ENCODE measurements at regions of chr7 and their contacts with region 1.

Region 1: GRCh38 chr7:43834463-43835251 is 34.7 kb downstream of the MRPS24 start:
- DNase-seq: no peak
- ATAC-seq: no peak
- H3K4me3 ChIP-seq: no peak overlapping the region
- H3K27ac ChIP-seq: no peak overlapping the region
- H3K4me1 ChIP-seq: peaks cover 0 to 24% of the 10 kb centered on the region in 2 experiments; a peak in 2 of 4 replicates
- H3K27me3 ChIP-seq: no peaks in the 10 kb centered on the region
- CTCF ChIP-seq: no peak
- POLR2A ChIP-seq: no peak
- RAD21 ChIP-seq: no peak

Region 2: GRCh38 chr7:42931834-42932651 is 902.6 kb before region 1 on chr7 and contains the starts of genes MRPL32 and PSMA2:
- CTCF ChIA-PET with region 1: no interaction called
- POLR2A ChIA-PET with region 1: no interaction called
- RAD21 ChIA-PET with region 1: no interaction called
- intact Hi-C with region 1: no loop called
- DNase-seq: peak; percentile 95
- ATAC-seq: peak; percentile 100
- H3K4me3 ChIP-seq: peak within 1 kb of the TSS; percentile 75 to 93
- H3K27ac ChIP-seq: peak within 1 kb of the TSS; percentile 47
- H3K4me1 ChIP-seq: peaks cover 5 to 26% of the 10 kb centered on the region in 2 experiments; a peak in 2 of 4 replicates
- H3K27me3 ChIP-seq: no peaks in the 10 kb centered on the region
- CTCF ChIP-seq: no peak
- POLR2A ChIP-seq: peak; percentile 92
- RAD21 ChIP-seq: no peak
- total RNA-seq, gene MRPL32: 47.5 TPM
- total RNA-seq, gene PSMA2: 152 TPM

Region 3: DNA sequence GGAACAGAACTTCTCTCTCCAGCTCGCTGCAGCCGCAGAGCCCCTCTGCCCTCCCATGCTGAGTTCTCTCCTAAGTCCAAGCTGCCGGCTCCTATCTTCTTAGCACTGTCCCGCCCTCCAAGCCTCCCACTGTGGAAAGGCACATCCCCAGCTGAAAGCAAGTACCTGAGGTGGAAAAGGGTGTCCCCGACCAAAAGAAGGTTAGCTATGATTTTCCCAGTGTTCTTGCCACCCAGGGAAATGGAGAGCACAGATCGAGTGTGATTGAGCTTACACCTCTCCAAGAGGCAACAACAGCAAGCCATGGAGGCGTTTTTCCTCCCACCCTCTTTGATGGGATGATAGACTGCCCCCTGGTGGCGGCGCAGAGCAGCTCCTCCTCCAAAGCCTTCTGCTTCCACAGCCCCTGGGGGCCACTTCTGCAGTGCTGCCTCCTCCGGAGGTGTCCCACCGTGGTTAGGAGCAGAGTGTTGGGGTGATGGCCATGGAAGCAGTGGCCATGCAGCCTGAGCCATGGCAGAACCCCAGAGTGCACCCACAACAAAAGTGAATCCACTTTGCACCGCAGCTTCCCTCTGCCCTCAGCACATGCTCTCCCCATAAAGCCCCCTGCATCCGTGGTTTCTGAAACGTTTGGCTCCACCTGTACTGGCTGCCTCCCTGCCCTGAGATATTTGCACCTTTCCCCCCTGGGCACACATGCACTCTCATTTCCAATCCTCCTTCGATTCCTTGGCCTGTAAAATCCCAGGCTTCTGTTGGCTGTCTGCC is 394.8 kb before region 1 on chr7:
- CTCF ChIA-PET with region 1: no interaction called
- POLR2A ChIA-PET with region 1: no interaction called
- RAD21 ChIA-PET with region 1: no interaction called
- intact Hi-C with region 1: loop called (anchors 5 kb)
- DNase-seq: peak; percentile 38
- ATAC-seq: peak; percentile 99
- H3K4me3 ChIP-seq: no peak overlapping the region
- H3K27ac ChIP-seq: no peak overlapping the region
- H3K4me1 ChIP-seq: no peaks in the 10 kb centered on the region
- H3K27me3 ChIP-seq: no peaks in the 10 kb centered on the region
- CTCF ChIP-seq: peak; percentile 60 to 94 (median 91)
- POLR2A ChIP-seq: no peak
- RAD21 ChIP-seq: peak; percentile 69

Region 4: GRCh38 chr7:43658718-43659548 is 175.7 kb before region 1 on chr7:
- CTCF ChIA-PET with region 1: no interaction called
- POLR2A ChIA-PET with region 1: no interaction called
- RAD21 ChIA-PET with region 1: no interaction called
- intact Hi-C with region 1: loop called (anchors 5 kb)
- DNase-seq: no peak
- ATAC-seq: no peak
- H3K4me3 ChIP-seq: no peak overlapping the region
- H3K27ac ChIP-seq: no peak overlapping the region
- H3K4me1 ChIP-seq: peaks cover 5 to 20% of the 10 kb centered on the region in 2 experiments; a peak in 3 of 4 replicates
- H3K27me3 ChIP-seq: no peaks in the 10 kb centered on the region
- CTCF ChIP-seq: no peak
- POLR2A ChIP-seq: no peak
- RAD21 ChIP-seq: no peak

Region 5: GRCh38 chr7:44309471-44310049 is 474.9 kb after region 1 on chr7:
- CTCF ChIA-PET with region 1: no interaction called
- POLR2A ChIA-PET with region 1: no interaction called
- RAD21 ChIA-PET with region 1: no interaction called
- intact Hi-C with region 1: no loop called
- DNase-seq: no peak
- ATAC-seq: no peak
- H3K4me3 ChIP-seq: no peak overlapping the region
- H3K27ac ChIP-seq: no peak overlapping the region
- H3K4me1 ChIP-seq: peaks cover 14 to 22% of the 10 kb centered on the region in 2 experiments; a peak in 3 of 4 replicates
- H3K27me3 ChIP-seq: no peaks in the 10 kb centered on the region
- CTCF ChIP-seq: no peak
- POLR2A ChIP-seq: no peak
- RAD21 ChIP-seq: no peak